ENCODE measurements at regions of chr10 and their contacts with region 1.

Region 1: DNA sequence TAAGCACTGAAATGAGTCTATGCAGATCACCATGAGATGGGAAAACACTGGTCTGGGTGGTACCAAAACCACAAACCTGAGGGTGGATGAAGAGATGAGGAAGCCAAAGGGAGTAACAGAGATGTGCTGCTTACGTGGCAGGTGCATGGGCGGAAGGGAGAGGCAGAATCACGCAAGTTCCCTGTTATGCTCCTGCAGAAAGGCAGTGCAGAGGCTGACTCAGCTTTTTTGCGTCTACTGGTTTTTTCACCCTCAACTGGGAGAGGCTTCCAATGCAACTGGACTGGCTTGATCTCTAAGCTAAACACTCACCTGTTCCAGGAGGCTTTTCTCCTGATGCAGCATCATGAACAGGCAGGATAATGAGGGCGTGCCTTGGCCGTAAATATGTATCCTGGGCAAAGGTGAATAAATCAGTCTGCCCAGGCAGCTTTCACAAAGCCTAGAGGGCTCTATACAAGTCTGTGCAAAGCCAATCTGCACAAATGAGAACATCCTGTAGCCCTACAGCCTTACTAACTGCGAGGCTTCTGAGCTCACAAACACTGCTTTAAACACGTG is 95.4 kb upstream of the AFAP1L2 start:
- DNase-seq: peak; percentile 89
- ATAC-seq: peak; percentile 54
- H3K4me3 Mint-ChIP-seq: peak overlapping the region; percentile 61
- H3K27ac Mint-ChIP-seq: peak overlapping the region; percentile 99
- H3K4me1 Mint-ChIP-seq: peaks cover 92% of the 10 kb centered on the region
- H3K27me3 Mint-ChIP-seq: no peaks in the 10 kb centered on the region

Region 2: GRCh38 chr10:114256822-114257221 is 242.9 kb before region 1 on chr10:
- CTCF ChIA-PET with region 1: no interaction called
- POLR2A ChIA-PET with region 1: no interaction called
- intact Hi-C with region 1: no loop called
- DNase-seq: no peak
- ATAC-seq: no peak
- H3K4me3 Mint-ChIP-seq: no peak overlapping the region
- H3K27ac Mint-ChIP-seq: no peak overlapping the region
- H3K4me1 Mint-ChIP-seq: peaks cover 6% of the 10 kb centered on the region
- H3K27me3 Mint-ChIP-seq: no peaks in the 10 kb centered on the region

Region 3: DNA sequence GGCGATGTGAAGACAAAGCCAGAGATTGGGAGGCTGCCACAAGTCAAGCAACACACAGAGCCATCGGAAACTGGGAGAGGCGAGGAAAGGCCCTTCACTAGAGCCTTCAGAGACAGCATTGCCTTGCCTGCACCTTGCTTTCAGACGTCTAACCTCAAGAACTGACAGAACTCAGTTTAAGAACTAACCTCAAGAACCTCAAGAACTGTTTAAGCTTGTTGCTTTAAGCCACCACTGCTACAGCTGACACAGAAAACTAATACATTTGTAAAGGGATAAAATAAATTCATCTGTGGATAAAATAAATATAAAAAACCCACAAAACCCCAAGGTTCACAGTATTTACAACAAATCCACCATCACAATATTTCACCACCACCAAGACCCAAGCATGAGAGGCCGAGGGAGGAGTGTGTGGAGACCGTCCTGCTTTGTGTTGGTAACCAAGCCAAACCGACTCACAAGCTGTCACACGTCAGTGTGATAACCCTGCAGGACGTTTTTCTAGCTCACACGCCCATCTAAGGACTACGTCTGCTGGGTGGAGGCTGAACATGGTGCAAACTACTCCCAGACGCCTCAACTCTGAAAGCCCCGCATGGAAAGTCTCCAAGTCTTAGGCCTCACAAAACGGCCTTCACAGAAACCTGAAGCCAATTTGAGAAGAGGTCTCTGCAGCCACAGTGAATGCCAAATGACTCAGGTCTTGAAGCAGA is 41.5 kb after region 1 on chr10:
- CTCF ChIA-PET with region 1: interaction called, 8 read pairs
- POLR2A ChIA-PET with region 1: interaction called, 6 read pairs
- intact Hi-C with region 1: loop called (anchors 1 to 2 kb)
- DNase-seq: peak; percentile 85
- ATAC-seq: peak; percentile 84
- H3K4me3 Mint-ChIP-seq: peak overlapping the region; percentile 55
- H3K27ac Mint-ChIP-seq: peak overlapping the region; percentile 99
- H3K4me1 Mint-ChIP-seq: peaks cover 90% of the 10 kb centered on the region
- H3K27me3 Mint-ChIP-seq: no peaks in the 10 kb centered on the region